ENCODE measurements at regions of chr10 and their contacts with region 1.

Region 1: DNA sequence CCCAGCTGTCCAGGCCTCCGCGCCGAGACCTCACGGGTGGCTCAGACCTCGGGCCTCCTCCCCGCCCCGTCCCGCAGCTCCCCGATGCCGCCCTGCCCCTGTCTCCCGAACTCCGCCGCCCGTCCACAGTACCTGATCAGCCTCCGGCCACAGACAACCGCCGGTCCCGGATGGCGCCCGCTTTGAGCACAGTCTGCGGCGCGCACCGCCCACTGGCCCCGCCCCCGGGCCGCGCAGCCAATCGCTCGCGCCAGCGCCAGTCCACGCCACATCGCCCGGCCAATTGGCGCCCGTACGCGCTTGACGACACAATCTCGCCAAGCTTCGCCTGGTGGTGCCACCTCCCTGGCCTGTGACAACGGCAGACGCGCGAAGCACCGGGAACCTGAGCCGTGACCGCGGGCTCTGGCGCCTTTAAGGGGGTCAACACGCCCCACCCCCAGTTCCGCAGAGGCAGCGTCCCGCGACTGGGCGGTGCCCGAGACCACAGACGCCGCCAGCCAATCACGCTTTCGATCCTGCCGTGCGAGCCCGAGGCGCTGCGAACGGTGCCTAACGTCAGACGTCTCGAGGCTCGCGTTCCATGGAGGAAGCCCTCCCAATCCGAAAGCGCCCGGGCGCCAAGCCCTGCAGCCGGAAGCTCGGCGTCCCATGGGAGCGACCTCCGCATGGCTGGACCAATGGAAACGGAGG is at the start of gene IDI1:
- DNase-seq: peak; percentile 98 to 99
- ATAC-seq: peak; percentile 85 to 86
- H3K4me3 ChIP-seq: peak within 1 kb of the TSS; percentile 72 to 87 (median 80)
- H3K27ac ChIP-seq: peak within 1 kb of the TSS; percentile 91 to 97 (median 96)
- H3K4me1 ChIP-seq: peaks cover 57 to 59% of the 10 kb centered on the region in 2 donors
- H3K27me3 ChIP-seq: no peaks in the 10 kb centered on the region
- CTCF ChIP-seq: no peak
- POLR2A ChIP-seq: peak; percentile 97 to 99
- total RNA-seq, gene IDI1: 48.3 to 66.8 (median 66.5) TPM

Region 2: GRCh38 chr10:511101-511848 is 537.6 kb before region 1 on chr10:
- in situ Hi-C with region 1: no loop called
- intact Hi-C with region 1: loop called (anchors 5 kb)
- DNase-seq: peak; percentile 92 to 95
- ATAC-seq: peak; percentile 90 to 91
- H3K4me3 ChIP-seq: peak overlapping the region in 2 of 4 donors; percentile 12 to 19
- H3K27ac ChIP-seq: peak overlapping the region; percentile 69 to 80 (median 78)
- H3K4me1 ChIP-seq: peaks cover 20 to 25% of the 10 kb centered on the region in 2 donors
- H3K27me3 ChIP-seq: no peaks in the 10 kb centered on the region
- CTCF ChIP-seq: peak; percentile 95 to 98 (median 97)
- POLR2A ChIP-seq: no peak

Region 3: GRCh38 chr10:624605-625332 is 424.1 kb before region 1 on chr10:
- in situ Hi-C with region 1: no loop called
- intact Hi-C with region 1: loop called (anchors 10 kb)
- DNase-seq: peak; percentile 85 to 90
- ATAC-seq: peak; percentile 78 to 88
- H3K4me3 ChIP-seq: peak overlapping the region; percentile 22 to 54 (median 46)
- H3K27ac ChIP-seq: peak overlapping the region; percentile 87 to 92 (median 88)
- H3K4me1 ChIP-seq: peaks cover 51 to 53% of the 10 kb centered on the region in 2 donors
- H3K27me3 ChIP-seq: no peaks in the 10 kb centered on the region
- CTCF ChIP-seq: no peak
- POLR2A ChIP-seq: peak; percentile 35 to 38

Region 4: DNA sequence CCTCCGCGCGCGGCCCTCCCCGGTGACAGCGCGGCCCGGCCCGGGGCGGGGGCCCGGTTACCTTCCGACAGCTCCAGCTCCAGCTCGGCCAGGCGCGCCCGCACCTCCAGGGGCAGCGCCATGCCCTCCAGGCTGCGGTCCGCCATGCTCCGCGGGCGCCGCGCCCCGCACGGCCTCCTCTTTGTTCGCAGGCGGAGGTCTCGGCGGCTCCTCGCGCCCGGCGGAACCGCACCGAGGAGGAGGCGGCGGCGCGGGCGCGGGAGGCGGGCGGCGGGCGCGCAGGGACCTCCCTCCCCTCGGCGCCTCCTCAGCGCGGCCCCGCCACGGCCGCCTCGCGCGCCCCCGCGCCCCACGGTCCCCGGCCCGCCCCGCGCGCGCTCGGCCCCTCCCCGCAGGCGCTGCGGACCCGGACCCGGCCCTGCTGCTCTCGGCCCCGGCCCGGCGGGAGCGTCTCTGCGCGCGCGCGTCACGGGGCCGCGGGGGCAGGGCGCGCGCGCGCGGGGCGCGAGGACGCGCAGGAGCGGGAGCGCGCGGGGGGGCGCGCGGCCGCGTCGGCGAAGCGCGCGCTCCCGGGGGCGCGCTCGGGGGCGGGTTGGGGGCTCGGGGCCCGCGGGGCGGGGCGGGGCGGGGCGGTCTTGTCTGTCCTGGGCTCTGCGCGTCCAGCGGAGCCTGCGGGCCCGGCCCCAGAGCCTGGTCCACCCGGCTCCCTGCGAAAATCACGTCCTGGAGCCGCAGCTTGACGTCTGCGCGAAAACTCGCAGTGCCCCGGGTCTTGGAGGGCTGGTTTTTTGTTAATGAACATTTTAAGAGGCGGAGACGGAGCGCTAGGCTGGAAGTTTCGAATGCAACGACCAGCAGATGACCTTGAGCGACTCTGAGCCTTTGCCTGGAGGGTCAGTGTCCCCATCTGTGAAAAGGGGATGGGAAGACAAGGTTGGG is 359.2 kb before region 1 on chr10 and contains the start of gene DIP2C:
- in situ Hi-C with region 1: no loop called
- intact Hi-C with region 1: loop called (anchors 10 kb)
- DNase-seq: peak; percentile 35 to 52
- ATAC-seq: peak; percentile 67 to 76
- H3K4me3 ChIP-seq: peak within 1 kb of the TSS; percentile 63 to 91 (median 80)
- H3K27ac ChIP-seq: peak within 1 kb of the TSS; percentile 80 to 88 (median 84)
- H3K4me1 ChIP-seq: peaks cover 1 to 16% of the 10 kb centered on the region in 2 donors
- H3K27me3 ChIP-seq: no peaks in the 10 kb centered on the region
- CTCF ChIP-seq: no peak
- POLR2A ChIP-seq: peak; percentile 67 to 73
- total RNA-seq, gene DIP2C: 19.1 to 60.0 (median 30.2) TPM

Region 5: DNA sequence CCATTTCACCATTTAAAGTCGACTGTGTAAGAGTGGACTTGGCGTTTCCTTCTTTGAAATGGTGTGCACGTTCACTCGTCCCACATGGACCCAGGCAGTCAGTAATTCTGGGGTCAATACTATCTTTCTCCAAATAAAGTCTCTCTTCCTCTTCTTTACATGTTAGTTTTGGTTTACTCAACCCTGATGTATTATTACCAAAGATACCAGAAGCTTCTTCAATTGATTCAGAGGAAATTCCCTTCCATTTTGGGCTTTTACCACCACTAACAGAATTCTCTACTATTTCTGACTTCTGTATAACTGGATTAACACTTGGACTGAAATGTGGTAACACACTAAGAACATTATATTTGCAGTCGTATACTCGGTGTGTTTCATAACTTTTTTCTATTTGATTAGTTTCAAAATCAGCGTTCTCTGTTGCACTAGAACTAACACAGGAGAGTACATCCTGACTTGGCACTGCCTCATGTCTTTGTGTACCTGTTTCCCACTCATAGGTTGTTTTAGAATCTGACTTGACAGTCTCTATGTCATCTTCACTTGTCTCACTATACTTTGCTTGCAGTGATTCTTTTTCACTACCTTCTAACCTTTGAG is 178.2 kb before region 1 on chr10:
- in situ Hi-C with region 1: no loop called
- intact Hi-C with region 1: loop called (anchors 5 kb)
- DNase-seq: no peak
- ATAC-seq: no peak
- H3K4me3 ChIP-seq: no peak overlapping the region
- H3K27ac ChIP-seq: peak overlapping the region; percentile 93 to 95 (median 94)
- H3K4me1 ChIP-seq: peaks cover 72 to 75% of the 10 kb centered on the region in 2 donors
- H3K27me3 ChIP-seq: no peaks in the 10 kb centered on the region
- CTCF ChIP-seq: no peak
- POLR2A ChIP-seq: no peak

Region 6: GRCh38 chr10:931416-932318 is 117.2 kb before region 1 on chr10 and contains the start of gene LARP4B:
- in situ Hi-C with region 1: loop called in 1 of 4 experiments (anchors 10 kb)
- intact Hi-C with region 1: loop called (anchors 2 kb)
- DNase-seq: peak; percentile 93 to 97
- ATAC-seq: peak; percentile 92 to 93
- H3K4me3 ChIP-seq: peak within 1 kb of the TSS; percentile 75 to 95 (median 82)
- H3K27ac ChIP-seq: peak within 1 kb of the TSS; percentile 96 to 100 (median 98)
- H3K4me1 ChIP-seq: peaks cover 37 to 45% of the 10 kb centered on the region in 2 donors
- H3K27me3 ChIP-seq: no peaks in the 10 kb centered on the region
- CTCF ChIP-seq: no peak
- POLR2A ChIP-seq: peak; percentile 88 to 90
- total RNA-seq, gene LARP4B: 29.7 to 45.6 (median 40.0) TPM

Region 7: DNA sequence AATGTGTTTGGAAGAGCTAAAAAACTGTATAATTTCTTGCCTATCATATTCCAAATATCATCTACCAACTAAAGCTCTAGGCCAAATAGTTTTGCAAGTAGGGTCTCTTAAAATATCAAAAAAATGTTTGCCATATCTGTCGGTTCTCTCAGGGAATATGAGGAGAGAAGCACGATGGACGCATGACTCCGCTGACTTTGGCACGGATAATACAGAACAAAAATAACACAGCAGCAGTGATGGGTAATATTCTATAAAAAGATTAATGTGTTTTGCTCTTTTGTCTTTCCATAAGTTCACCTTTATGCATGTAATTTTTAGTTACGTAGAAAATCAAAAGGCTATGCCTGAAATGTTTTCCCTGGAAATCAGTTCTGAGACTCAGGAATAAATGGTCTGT is 22.3 kb before region 1 on chr10:
- in situ Hi-C with region 1: no loop called
- intact Hi-C with region 1: loop called (anchors 2 kb)
- DNase-seq: peak in 1 of 2 donors; percentile 66
- ATAC-seq: peak; percentile 72 to 77
- H3K4me3 ChIP-seq: peak overlapping the region in 2 of 4 donors; percentile 40 to 47
- H3K27ac ChIP-seq: peak overlapping the region; percentile 85 to 95 (median 90)
- H3K4me1 ChIP-seq: peaks cover 37 to 38% of the 10 kb centered on the region in 2 donors
- H3K27me3 ChIP-seq: no peaks in the 10 kb centered on the region
- CTCF ChIP-seq: no peak
- POLR2A ChIP-seq: peak in 1 of 2 donors; percentile 40

Region 8: DNA sequence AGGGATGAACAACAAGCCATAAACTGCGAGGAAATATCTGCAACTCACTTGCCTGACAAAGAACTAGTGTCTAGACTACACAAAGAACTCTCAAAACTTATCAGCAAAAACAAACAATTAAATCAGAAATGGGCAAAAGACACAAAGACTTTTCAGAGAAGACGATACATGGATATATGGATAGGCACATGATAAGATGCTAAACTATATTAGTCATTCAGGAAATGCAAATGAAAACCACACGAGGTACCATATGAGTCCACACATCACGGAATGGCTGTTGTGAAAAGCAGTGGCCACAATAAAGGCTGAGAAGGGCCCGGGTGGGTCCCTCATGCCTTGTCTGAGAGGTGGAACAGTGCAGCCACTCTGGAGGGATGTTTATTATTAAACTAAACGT is 275.1 kb after region 1 on chr10:
- in situ Hi-C with region 1: no loop called
- intact Hi-C with region 1: no loop called
- DNase-seq: no peak
- ATAC-seq: no peak
- H3K4me3 ChIP-seq: no peak overlapping the region
- H3K27ac ChIP-seq: no peak overlapping the region
- H3K4me1 ChIP-seq: no peaks in the 10 kb centered on the region
- H3K27me3 ChIP-seq: peaks cover 0 to 8% (median 0%) of the 10 kb centered on the region in 3 donors
- CTCF ChIP-seq: no peak
- POLR2A ChIP-seq: no peak

Measured in gastrocnemius medialis (tissue), 4 donors.